ENCODE measurements at regions of chr11 and their contacts with region 1.

Region 1: GRCh38 chr11:118689851-118690552 is 10.6 kb upstream of the TREH start:
- DNase-seq: peak; percentile 90 to 98 (median 98)
- ATAC-seq: peak; percentile 92 to 97 (median 93)
- H3K4me3 ChIP-seq: peak overlapping the region; percentile 3 to 35 (median 24)
- H3K27ac ChIP-seq: peak overlapping the region in 3 of 4 donors; percentile 61 to 94 (median 85)
- H3K4me1 ChIP-seq: no peaks in the 10 kb centered on the region
- H3K27me3 ChIP-seq: no peaks in the 10 kb centered on the region
- CTCF ChIP-seq: peak; percentile 74 to 90 (median 79)

Region 2: GRCh38 chr11:118640332-118641154 is 49.5 kb before region 1 on chr11:
- intact Hi-C with region 1: no loop called
- DNase-seq: peak in 1 of 6 donors; percentile 63
- ATAC-seq: peak in 2 of 4 donors; percentile 27 to 39
- H3K4me3 ChIP-seq: no peak overlapping the region
- H3K27ac ChIP-seq: no peak overlapping the region
- H3K4me1 ChIP-seq: peaks cover 6 to 35% (median 19%) of the 10 kb centered on the region in 3 donors
- H3K27me3 ChIP-seq: no peaks in the 10 kb centered on the region
- CTCF ChIP-seq: no peak

Region 3: GRCh38 chr11:118956094-118956846 is 266.3 kb after region 1 on chr11 and contains the start of gene UPK2:
- intact Hi-C with region 1: loop called in 2 of 3 experiments (anchors 5 to 10 kb)
- DNase-seq: peak; percentile 83 to 96 (median 94)
- ATAC-seq: peak; percentile 98 to 100 (median 99)
- H3K4me3 ChIP-seq: no peak within 1 kb of the TSS
- H3K27ac ChIP-seq: no peak within 1 kb of the TSS
- H3K4me1 ChIP-seq: no peaks in the 10 kb centered on the region
- H3K27me3 ChIP-seq: no peaks in the 10 kb centered on the region
- CTCF ChIP-seq: peak; percentile 93 to 97 (median 94)
- total RNA-seq, gene UPK2: 0.16 TPM in 1 of 6 donors, not detected in the others